ENCODE measurements at regions of chr20 and their contacts with region 1.

Region 1: DNA sequence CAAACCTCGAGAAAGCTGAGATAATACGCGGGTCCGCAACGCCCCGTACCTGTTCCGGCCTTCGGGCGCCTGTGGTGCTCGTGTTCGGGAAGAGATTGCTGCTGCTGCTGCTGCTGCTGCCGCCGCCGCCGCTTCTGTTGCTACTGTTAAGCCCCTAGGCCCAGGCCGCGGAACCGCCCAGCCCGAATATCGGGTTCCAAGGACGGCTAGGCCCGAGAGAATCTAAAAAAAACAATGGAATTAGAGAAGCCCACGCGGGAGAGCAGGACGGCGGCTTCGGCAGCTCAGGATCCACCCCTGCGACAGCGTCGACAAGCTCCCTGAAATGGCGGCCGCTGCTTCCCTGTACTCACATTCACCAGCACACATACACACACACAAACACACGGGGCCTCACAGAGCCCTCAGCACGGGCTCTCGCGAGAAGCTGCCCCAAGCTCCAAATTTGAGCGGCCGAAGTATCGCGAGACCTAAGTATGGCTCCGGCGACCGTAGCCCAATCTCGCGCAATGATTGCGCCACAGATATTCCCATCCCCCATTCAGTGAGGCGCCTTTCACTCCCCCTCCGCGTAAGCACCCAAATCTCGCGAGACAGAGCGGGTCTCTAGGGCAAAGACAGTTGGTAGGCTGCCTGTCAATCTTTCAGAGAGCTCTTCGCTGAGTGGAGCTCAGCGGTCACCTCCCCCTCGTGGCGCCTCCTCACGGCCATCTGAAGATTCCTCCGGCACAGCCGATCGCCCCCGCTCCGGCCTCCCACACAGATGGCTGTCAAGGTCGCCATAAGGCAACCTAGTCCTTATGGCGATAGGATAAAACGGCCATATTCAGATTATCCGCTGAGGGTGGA is at the start of gene RBM39:
- DNase-seq: peak; percentile 99 to 100 (median 100)
- H3K4me3 ChIP-seq: peak within 1 kb of the TSS; percentile 78 to 99
- H3K4me3 Mint-ChIP-seq: peak within 1 kb of the TSS; percentile 98 to 100 (median 99)
- H3K27ac ChIP-seq: peak within 1 kb of the TSS; percentile 100
- H3K27ac Mint-ChIP-seq: peak within 1 kb of the TSS; percentile 98 to 100 (median 100)
- H3K4me1 ChIP-seq: peaks cover 58% of the 10 kb centered on the region
- H3K4me1 Mint-ChIP-seq: peaks cover 29 to 60% (median 40%) of the 10 kb centered on the region in 4 donors
- H3K27me3 ChIP-seq: no peaks in the 10 kb centered on the region
- H3K27me3 Mint-ChIP-seq: peaks cover 0 to 3% of the 10 kb centered on the region in 2 donors
- total RNA-seq, gene RBM39: 631 to 665 TPM

Region 2: GRCh38 chr20:35541783-35542588 is 200.1 kb before region 1 on chr20 and contains the start of gene ERGIC3:
- CTCF ChIA-PET with region 1: no interaction called
- POLR2A ChIA-PET with region 1: interaction called, 9 read pairs
- intact Hi-C with region 1: loop called (anchors 5 kb)
- DNase-seq: peak; percentile 95 to 96 (median 95)
- H3K4me3 ChIP-seq: peak within 1 kb of the TSS; percentile 37 to 76
- H3K4me3 Mint-ChIP-seq: peak within 1 kb of the TSS; percentile 86 to 93 (median 90)
- H3K27ac ChIP-seq: peak within 1 kb of the TSS; percentile 78
- H3K27ac Mint-ChIP-seq: peak within 1 kb of the TSS; percentile 86 to 95 (median 92)
- H3K4me1 ChIP-seq: peaks cover 15% of the 10 kb centered on the region
- H3K4me1 Mint-ChIP-seq: peaks cover 11 to 28% (median 21%) of the 10 kb centered on the region in 4 donors
- H3K27me3 ChIP-seq: no peaks in the 10 kb centered on the region
- H3K27me3 Mint-ChIP-seq: no peaks in the 10 kb centered on the region
- total RNA-seq, gene ERGIC3: 148 to 151 TPM

Region 3: GRCh38 chr20:35699127-35699975 is 42.8 kb before region 1 on chr20 and contains the starts of genes NFS1 and ROMO1:
- CTCF ChIA-PET with region 1: interaction called, 6 read pairs
- POLR2A ChIA-PET with region 1: interaction called, 100 read pairs
- intact Hi-C with region 1: loop called (anchors 1 kb)
- DNase-seq: peak; percentile 82 to 88 (median 83)
- H3K4me3 ChIP-seq: peak within 1 kb of the TSS; percentile 90 to 92
- H3K4me3 Mint-ChIP-seq: peak within 1 kb of the TSS; percentile 92 to 99 (median 95)
- H3K27ac ChIP-seq: peak within 1 kb of the TSS; percentile 84
- H3K27ac Mint-ChIP-seq: peak within 1 kb of the TSS; percentile 93 to 99 (median 97)
- H3K4me1 ChIP-seq: peaks cover 38% of the 10 kb centered on the region
- H3K4me1 Mint-ChIP-seq: peaks cover 33 to 67% (median 42%) of the 10 kb centered on the region in 4 donors
- H3K27me3 ChIP-seq: no peaks in the 10 kb centered on the region
- H3K27me3 Mint-ChIP-seq: no peaks in the 10 kb centered on the region
- total RNA-seq, gene NFS1: 30.3 to 33.6 TPM
- total RNA-seq, gene ROMO1: 38.4 to 43.8 TPM

Region 4: DNA sequence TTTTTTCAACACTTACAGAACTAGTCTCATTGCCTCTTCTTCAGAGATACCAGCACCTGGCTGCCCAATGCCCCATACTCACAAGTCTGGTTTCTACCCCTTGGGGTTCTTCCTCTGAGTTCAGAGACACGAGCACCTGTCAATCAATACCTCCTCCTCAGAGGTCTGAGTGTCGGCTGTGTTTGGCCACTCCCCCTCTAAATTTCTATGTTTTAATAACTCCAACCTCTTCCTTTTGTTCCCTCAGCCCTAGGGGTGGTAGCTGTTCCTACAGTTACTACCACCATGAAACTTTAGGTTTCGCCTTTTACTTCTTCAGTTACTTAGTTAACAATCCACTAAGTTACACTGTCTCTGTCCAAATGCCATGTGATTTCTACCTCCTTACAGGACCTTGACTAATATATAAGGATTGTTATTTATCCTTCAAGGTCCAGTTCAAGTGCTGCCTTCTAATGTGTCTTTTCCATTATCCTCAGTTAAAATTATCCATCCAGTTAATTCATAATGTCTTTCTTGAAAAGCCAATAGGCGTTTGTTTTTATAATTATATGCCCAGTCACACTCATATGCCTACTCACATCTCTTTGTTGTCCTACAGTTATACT is 15.1 kb after region 1 on chr20:
- CTCF ChIA-PET with region 1: no interaction called
- POLR2A ChIA-PET with region 1: interaction called, 1,007 read pairs
- intact Hi-C with region 1: no loop called
- DNase-seq: no peak
- H3K4me3 ChIP-seq: no peak overlapping the region
- H3K4me3 Mint-ChIP-seq: peak overlapping the region in 1 of 8 donors; percentile 52
- H3K27ac ChIP-seq: no peak overlapping the region
- H3K27ac Mint-ChIP-seq: peak overlapping the region in 3 of 7 donors; percentile 4 to 65 (median 50)
- H3K4me1 ChIP-seq: no peaks in the 10 kb centered on the region
- H3K4me1 Mint-ChIP-seq: peaks cover 2 to 6% (median 5%) of the 10 kb centered on the region in 4 donors
- H3K27me3 ChIP-seq: no peaks in the 10 kb centered on the region
- H3K27me3 Mint-ChIP-seq: no peaks in the 10 kb centered on the region

Region 5: GRCh38 chr20:35837577-35838198 is 95.6 kb after region 1 on chr20:
- CTCF ChIA-PET with region 1: no interaction called
- POLR2A ChIA-PET with region 1: interaction called, 49 read pairs
- intact Hi-C with region 1: no loop called
- DNase-seq: no peak
- H3K4me3 ChIP-seq: no peak overlapping the region
- H3K4me3 Mint-ChIP-seq: no peak overlapping the region
- H3K27ac ChIP-seq: no peak overlapping the region
- H3K27ac Mint-ChIP-seq: peak overlapping the region in 6 of 7 donors; percentile 7 to 65 (median 42)
- H3K4me1 ChIP-seq: peaks cover 29% of the 10 kb centered on the region
- H3K4me1 Mint-ChIP-seq: peaks cover 45 to 64% (median 53%) of the 10 kb centered on the region in 4 donors
- H3K27me3 ChIP-seq: no peaks in the 10 kb centered on the region
- H3K27me3 Mint-ChIP-seq: no peaks in the 10 kb centered on the region

Measured in CD4-positive, alpha-beta memory T cell (primary cell).